IMR-90 (cell line): ENCODE measurements at regions of chr6 and their contacts with region 1.

Region 1: GRCh38 chr6:26342106-26343004 is 22.6 kb upstream of the BTN3A2 start:
- DNase-seq: peak; percentile 55
- ATAC-seq: peak; percentile 30; the same call in 1 of the 2 replicates
- H3K4me3 ChIP-seq: peak overlapping the region; percentile 21; the same call in 1 of the 2 replicates
- H3K27ac ChIP-seq: no peak overlapping the region
- H3K4me1 ChIP-seq: no peaks in the 10 kb centered on the region
- H3K27me3 ChIP-seq: no peaks in the 10 kb centered on the region
- CTCF ChIP-seq: no peak
- POLR2A ChIP-seq: no peak
- RAD21 ChIP-seq: no peak

Region 2: GRCh38 chr6:26401987-26402658 is 59.8 kb after region 1 on chr6 and contains the start of gene BTN3A1:
- CTCF ChIA-PET with region 1: no interaction called
- POLR2A ChIA-PET with region 1: no interaction called
- dilution Hi-C with region 1: no loop called
- in situ Hi-C with region 1: no loop called
- intact Hi-C with region 1: loop called (anchors 5 kb)
- DNase-seq: peak; percentile 70
- ATAC-seq: peak; percentile 97
- H3K4me3 ChIP-seq: peak within 1 kb of the TSS; percentile 96
- H3K27ac ChIP-seq: peak within 1 kb of the TSS; percentile 72
- H3K4me1 ChIP-seq: peaks cover 5% of the 10 kb centered on the region; the same call in 1 of the 2 replicates
- H3K27me3 ChIP-seq: no peaks in the 10 kb centered on the region
- CTCF ChIP-seq: no peak
- POLR2A ChIP-seq: peak; percentile 46; the same call in 1 of the 2 replicates
- RAD21 ChIP-seq: 0 out of 2 replicates have a peak, but pooled peaks have one; percentile 13
- total RNA-seq, gene BTN3A1: 15.3 and 16.5 TPM in 2 replicates

Region 3: DNA sequence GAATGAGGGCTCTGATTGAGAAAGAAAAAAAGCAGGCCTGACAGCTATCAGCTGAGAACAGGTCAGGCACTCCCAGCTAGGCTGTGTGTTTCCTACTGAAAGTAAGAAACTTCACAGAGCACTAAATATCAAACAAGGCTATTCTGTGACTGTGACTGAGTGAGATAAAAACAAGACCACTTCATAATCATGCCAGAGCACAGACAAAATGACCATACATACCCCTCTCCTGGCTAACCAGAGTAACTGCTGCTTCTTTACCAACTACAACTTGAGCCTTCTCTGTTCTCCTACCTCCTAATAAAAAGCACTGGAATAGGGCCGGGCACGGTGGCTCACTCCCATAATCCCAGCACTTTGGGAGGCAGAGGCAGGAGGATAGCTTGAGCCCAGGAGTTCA is 150.9 kb after region 1 on chr6:
- CTCF ChIA-PET with region 1: interaction called, 3 read pairs
- POLR2A ChIA-PET with region 1: no interaction called
- dilution Hi-C with region 1: no loop called
- in situ Hi-C with region 1: no loop called
- intact Hi-C with region 1: loop called (anchors 1 kb)
- DNase-seq: peak; percentile 55
- ATAC-seq: peak; percentile 75
- H3K4me3 ChIP-seq: no peak overlapping the region
- H3K27ac ChIP-seq: no peak overlapping the region
- H3K4me1 ChIP-seq: no peaks in the 10 kb centered on the region
- H3K27me3 ChIP-seq: peaks cover 6% of the 10 kb centered on the region
- CTCF ChIP-seq: peak; percentile 38
- POLR2A ChIP-seq: no peak
- RAD21 ChIP-seq: peak; percentile 53

Region 4: DNA sequence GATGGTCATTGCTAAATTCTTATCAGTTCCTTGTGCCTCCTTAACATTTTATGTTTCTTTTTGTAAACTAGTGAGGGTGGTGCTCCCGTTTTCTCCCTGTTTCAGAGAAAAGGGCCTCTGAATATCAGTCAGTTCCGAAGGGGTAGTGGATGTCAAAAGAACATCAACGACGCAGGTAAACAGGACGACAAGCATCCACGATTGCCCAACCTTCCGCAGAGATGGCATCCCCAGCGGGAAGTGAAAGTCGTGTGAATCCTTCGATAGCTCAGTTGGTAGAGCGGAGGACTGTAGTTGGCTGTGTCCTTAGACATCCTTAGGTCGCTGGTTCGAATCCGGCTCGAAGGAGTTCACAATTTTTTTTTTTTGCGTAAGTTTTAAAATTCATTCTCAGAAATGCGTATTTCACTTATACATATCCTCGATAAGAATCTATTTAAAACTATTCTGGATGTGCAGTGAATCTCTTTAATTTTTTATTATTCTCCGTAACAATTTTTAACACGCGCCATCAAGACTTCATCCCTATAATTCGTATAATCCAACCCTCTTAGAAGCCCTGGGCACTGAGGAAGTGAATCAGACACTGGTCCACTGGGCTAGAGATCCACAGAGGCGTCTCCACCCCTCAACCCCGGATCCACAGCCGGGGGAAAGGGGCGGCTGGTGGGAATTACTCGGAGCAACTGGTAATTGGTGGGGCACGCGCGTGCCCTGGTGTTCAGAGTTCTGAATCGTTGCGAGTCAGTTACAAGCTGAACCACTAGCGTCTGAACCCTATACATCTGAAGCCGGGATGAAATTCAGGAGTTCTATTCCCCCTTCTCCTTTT is 226.5 kb after region 1 on chr6:
- CTCF ChIA-PET with region 1: interaction called, 6 read pairs
- POLR2A ChIA-PET with region 1: no interaction called
- dilution Hi-C with region 1: no loop called
- in situ Hi-C with region 1: no loop called
- intact Hi-C with region 1: loop called (anchors 1 kb)
- DNase-seq: peak; percentile 89
- ATAC-seq: peak; percentile 61
- H3K4me3 ChIP-seq: peak overlapping the region; percentile 65
- H3K27ac ChIP-seq: no peak overlapping the region; the same call in 1 of the 2 replicates
- H3K4me1 ChIP-seq: no peaks in the 10 kb centered on the region
- H3K27me3 ChIP-seq: no peaks in the 10 kb centered on the region
- CTCF ChIP-seq: peak; percentile 45
- POLR2A ChIP-seq: no peak
- RAD21 ChIP-seq: peak; percentile 54